ENCODE measurements at regions of chr1 and their contacts with region 1.

Region 1: DNA sequence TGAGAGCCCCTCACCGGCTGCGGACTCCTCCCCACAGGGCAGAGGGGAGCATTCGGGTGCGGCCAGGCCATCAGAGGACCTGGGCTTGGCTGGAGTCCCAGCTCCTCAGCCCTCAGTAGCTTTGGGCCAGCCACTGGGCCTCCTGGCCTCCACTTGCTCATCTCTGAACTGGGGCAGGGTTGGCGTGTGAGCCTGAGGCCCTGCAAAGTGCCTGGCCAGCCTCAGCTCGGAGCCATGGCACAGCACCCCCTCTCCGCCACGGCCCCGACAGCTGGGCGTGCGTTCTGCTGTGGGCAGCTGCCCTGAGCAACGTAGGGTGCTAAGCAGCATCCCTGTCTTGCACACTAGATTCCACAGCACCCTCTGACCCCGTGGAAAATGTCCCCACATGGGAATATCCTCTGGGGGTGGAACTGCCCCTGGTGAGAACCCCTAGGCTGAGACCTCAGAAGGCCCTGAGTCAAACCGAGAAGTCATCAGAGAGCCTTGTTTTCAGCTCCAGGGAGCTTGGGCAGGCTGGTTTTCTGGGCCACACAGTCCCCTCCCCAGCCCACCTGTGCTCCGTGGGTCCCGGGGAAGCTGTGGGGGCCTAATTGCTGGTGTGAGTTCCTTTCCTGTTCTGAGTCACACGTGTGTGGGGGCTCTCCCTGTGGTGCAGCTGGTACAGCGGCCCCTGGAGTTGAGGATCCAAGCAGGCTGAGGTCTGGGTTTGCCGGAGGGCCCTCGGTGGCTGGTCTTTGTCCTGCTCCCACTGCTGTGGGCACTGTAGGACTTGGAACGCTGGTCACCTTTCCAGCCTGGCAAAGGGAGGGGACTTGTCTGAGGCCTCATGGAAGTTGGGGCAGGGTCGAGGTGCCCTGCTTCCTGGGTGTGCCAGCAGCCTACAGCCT is 24.5 kb downstream of the TP73 start:
- DNase-seq: no peak

Region 2: DNA sequence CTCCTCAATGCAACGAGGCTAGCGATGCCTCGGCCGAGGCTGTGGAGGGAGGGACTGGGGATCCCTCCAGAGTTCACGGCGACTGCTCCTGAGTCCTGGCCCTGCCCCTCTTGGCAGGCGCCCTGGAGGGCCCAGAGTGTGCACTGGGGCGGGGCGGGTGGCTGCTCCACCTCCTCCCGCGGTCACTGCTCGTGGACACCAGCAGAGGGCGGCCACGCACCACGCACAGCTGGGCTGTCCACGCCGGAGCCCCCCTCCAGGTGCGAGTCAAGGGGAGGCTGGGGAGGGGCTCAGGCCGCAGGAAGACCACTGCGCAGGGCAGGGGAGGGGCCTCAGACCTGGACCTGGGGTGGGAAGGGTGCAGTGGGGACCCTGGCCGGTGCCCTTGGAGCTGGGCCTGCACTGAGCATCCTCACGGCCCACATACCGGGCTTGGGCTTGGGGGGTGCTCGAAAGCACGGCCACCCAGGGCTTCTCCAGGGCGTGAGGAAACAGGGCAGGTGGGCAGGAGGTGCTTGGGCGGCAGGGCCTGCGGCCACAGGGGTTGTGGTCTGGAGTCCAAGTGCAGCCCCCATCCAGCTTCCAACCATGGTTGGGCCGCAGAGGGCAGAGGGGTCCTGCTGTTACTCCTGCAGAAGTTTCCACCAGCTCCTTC is 854.7 kb before region 1 on chr1:
- intact Hi-C with region 1: loop called in 1 of 2 experiments (anchors 5 kb)
- DNase-seq: no peak